HCT116 (cell line): ENCODE measurements at regions of chr13 and their contacts with region 1.

Region 1: GRCh38 chr13:49098771-49099512 is 121.2 kb upstream of the MLNR start:
- DNase-seq: peak; percentile 24
- ATAC-seq: peak; percentile 79
- H3K4me3 ChIP-seq: peak overlapping the region in 1 of 2 experiments; percentile 18; a peak in 1 of 4 replicates
- H3K27ac ChIP-seq: peak overlapping the region; percentile 58; the same call in 1 of the 2 replicates
- H3K4me1 ChIP-seq: peaks cover 26 to 30% of the 10 kb centered on the region in 2 experiments
- H3K27me3 ChIP-seq: no peaks in the 10 kb centered on the region
- CTCF ChIP-seq: peak; percentile 24 to 57 (median 41); a peak in 4 of 6 replicates
- POLR2A ChIP-seq: no peak
- RAD21 ChIP-seq: peak; percentile 60; the same call in 1 of the 2 replicates

Region 2: GRCh38 chr13:48975856-48976575 is 122.9 kb before region 1 on chr13 and contains the start of gene FNDC3A:
- CTCF ChIA-PET with region 1: no interaction called
- POLR2A ChIA-PET with region 1: no interaction called
- RAD21 ChIA-PET with region 1: no interaction called
- intact Hi-C with region 1: loop called (anchors 5 kb)
- DNase-seq: peak; percentile 48
- ATAC-seq: peak; percentile 87
- H3K4me3 ChIP-seq: peak within 1 kb of the TSS; percentile 58 to 62
- H3K27ac ChIP-seq: peak within 1 kb of the TSS; percentile 97
- H3K4me1 ChIP-seq: peaks cover 11 to 18% of the 10 kb centered on the region in 2 experiments; a peak in 3 of 4 replicates
- H3K27me3 ChIP-seq: no peaks in the 10 kb centered on the region
- CTCF ChIP-seq: no peak
- POLR2A ChIP-seq: no peak
- RAD21 ChIP-seq: no peak
- total RNA-seq, gene FNDC3A: 30.5 TPM

Region 3: GRCh38 chr13:49082653-49083536 is 16.0 kb before region 1 on chr13:
- CTCF ChIA-PET with region 1: no interaction called
- POLR2A ChIA-PET with region 1: no interaction called
- RAD21 ChIA-PET with region 1: no interaction called
- intact Hi-C with region 1: no loop called
- DNase-seq: no peak
- ATAC-seq: no peak
- H3K4me3 ChIP-seq: no peak overlapping the region
- H3K27ac ChIP-seq: no peak overlapping the region
- H3K4me1 ChIP-seq: peaks cover 0 to 9% of the 10 kb centered on the region in 2 experiments; a peak in 2 of 4 replicates
- H3K27me3 ChIP-seq: no peaks in the 10 kb centered on the region
- CTCF ChIP-seq: no peak
- POLR2A ChIP-seq: no peak
- RAD21 ChIP-seq: no peak

Region 4: DNA sequence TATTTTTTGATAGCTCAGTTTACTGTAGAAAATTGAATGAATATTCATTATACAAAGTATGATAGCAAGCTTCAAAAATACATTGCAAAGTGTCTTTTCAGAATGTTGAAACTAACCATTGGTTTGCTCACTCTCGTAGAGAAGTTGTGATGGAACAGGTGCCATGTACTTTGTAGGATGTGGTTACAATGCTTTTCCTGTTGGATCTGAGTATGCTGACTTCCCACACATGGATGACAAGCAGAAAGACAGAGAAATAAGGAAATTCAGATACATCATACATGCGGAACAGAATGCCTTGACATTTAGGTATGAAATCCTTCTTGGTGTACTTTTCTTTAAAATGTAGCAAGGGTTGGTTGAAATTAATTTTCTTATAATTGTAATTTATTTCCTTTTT is 179.3 kb after region 1 on chr13:
- CTCF ChIA-PET with region 1: interaction called, 43 read pairs
- POLR2A ChIA-PET with region 1: interaction called, 3 read pairs
- RAD21 ChIA-PET with region 1: no interaction called
- intact Hi-C with region 1: loop called (anchors 1 kb)
- DNase-seq: no peak
- ATAC-seq: no peak
- H3K4me3 ChIP-seq: no peak overlapping the region
- H3K27ac ChIP-seq: no peak overlapping the region
- H3K4me1 ChIP-seq: no peaks in the 10 kb centered on the region
- H3K27me3 ChIP-seq: no peaks in the 10 kb centered on the region
- CTCF ChIP-seq: no peak
- POLR2A ChIP-seq: no peak
- RAD21 ChIP-seq: no peak